Activated CD8-positive, alpha-beta memory T cell treated with anti-CD3 and anti-CD28 coated beads, Interleukin-2, amount 10 ng/mL, durations not matched to agents 7 days and 5 days (primary cell): ENCODE measurements at regions of chr16 and their contacts with region 1.

Region 1: GRCh38 chr16:75519881-75520280 is 16.0 kb downstream of the CHST5 start:
- DNase-seq: no peak
- ATAC-seq: no peak
- H3K4me3 Mint-ChIP-seq: no peak overlapping the region
- H3K27ac Mint-ChIP-seq: no peak overlapping the region
- H3K4me1 Mint-ChIP-seq: peaks cover 9% of the 10 kb centered on the region
- H3K27me3 Mint-ChIP-seq: peaks cover 4% of the 10 kb centered on the region

Region 2: DNA sequence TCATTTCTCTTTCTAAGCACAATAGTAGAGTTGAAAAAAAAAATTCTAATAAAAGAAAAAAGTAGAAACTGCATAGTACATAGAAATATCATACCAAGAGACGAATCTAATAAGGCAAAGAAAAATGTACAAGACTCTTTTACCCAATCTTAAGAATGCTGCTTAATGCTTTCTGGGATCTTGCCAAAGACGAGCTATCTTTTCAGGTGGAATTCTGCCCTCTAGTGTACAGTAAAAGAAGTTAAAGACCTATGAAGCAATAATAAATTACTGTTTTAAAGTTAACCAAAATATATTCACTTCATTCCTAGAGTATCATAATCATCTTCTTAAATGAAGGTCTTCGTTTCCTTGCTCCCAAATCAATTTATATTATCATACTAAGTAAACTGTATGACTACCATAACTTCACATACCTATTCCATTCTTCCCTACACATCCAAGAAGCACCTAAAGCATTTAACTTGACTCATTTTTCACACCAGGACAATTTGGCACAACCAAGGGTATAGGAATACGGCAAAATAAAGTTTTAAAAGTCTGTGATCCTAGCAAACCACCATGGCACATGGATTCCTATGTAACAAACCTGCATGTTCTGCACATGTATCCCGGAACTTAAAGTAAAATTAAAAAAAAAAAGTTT is 134.3 kb before region 1 on chr16:
- CTCF ChIA-PET with region 1: no interaction called
- DNase-seq: no peak
- ATAC-seq: peak; percentile 47
- H3K4me3 Mint-ChIP-seq: no peak overlapping the region
- H3K27ac Mint-ChIP-seq: no peak overlapping the region
- H3K4me1 Mint-ChIP-seq: peaks cover 5% of the 10 kb centered on the region
- H3K27me3 Mint-ChIP-seq: peaks cover 16% of the 10 kb centered on the region

Region 3: DNA sequence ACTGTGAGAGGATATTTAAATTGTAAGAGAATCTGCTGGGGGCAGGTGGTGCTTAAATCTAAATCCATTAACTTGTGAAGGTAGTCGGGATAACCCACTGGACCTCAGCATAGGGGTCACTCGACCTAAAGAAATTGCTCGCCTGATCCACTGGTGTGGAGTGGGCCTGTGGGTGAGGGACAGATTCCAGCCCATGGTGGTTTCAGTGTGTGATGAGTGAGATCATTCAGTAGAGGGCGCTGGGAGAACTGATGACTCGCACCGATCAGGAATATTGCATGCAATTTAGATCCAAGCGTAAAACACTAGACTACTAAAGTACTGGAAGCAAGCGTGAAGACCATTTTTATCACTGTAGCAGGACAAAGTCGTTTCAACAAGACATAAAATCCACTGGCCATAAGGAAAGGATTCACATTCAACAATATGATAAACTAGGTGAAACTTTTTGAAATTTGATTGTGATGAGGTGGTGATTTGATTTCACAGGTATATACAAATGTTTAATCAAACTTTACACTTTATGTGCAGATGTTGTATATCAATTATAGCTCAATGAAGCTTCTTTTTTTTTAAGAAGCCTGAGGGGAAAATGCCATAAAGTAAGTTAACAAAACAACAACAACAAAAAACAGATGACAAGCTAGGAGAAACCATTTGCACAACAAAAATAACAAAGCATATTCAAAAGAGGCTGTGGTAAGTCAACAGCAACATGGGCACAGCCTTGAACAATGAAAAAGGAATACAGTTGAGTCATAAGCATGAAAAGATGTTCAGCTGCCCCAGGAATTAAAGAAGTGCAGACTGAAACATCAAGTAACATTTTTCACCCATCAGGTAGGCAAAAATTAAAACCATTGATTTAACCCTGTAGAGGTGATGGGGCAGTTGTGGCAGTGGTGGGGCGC is 47.9 kb before region 1 on chr16:
- CTCF ChIA-PET with region 1: interaction called, 13 read pairs
- DNase-seq: peak; percentile 48
- ATAC-seq: peak; percentile 78
- H3K4me3 Mint-ChIP-seq: no peak overlapping the region
- H3K27ac Mint-ChIP-seq: no peak overlapping the region
- H3K4me1 Mint-ChIP-seq: no peaks in the 10 kb centered on the region
- H3K27me3 Mint-ChIP-seq: no peaks in the 10 kb centered on the region

Region 4: GRCh38 chr16:75555707-75556430 is 36.0 kb after region 1 on chr16 and contains the start of gene TMEM231:
- CTCF ChIA-PET with region 1: interaction called, 24 read pairs
- DNase-seq: peak; percentile 98
- ATAC-seq: peak; percentile 97
- H3K4me3 Mint-ChIP-seq: peak within 1 kb of the TSS; percentile 83
- H3K27ac Mint-ChIP-seq: peak within 1 kb of the TSS; percentile 62
- H3K4me1 Mint-ChIP-seq: peaks cover 13% of the 10 kb centered on the region
- H3K27me3 Mint-ChIP-seq: peaks cover 13% of the 10 kb centered on the region
- total RNA-seq, gene TMEM231: 2.9 to 3.2 TPM

Region 5: DNA sequence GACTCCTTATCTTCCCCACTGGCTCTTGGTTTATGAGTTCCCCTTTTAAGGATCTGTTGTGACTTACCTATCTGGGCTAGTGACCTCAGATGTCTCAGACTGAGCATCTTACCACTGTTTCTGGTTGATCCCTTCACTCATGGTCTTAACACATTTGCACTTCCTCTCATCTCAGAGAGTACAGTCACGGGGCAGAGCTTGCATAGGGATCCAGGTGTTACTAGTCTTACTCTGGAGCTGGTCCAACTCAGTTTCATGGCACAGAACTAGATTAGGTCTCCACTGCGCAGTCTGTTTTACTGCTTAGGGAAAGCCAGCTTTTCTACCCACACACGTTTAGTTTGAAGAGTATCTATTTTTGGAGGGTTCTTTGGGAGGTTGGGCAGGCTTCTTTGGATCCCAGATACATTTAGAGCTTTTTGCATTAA is 56.5 kb after region 1 on chr16:
- CTCF ChIA-PET with region 1: no interaction called
- DNase-seq: no peak
- ATAC-seq: no peak
- H3K4me3 Mint-ChIP-seq: no peak overlapping the region
- H3K27ac Mint-ChIP-seq: no peak overlapping the region
- H3K4me1 Mint-ChIP-seq: peaks cover 17% of the 10 kb centered on the region
- H3K27me3 Mint-ChIP-seq: no peaks in the 10 kb centered on the region

Region 6: GRCh38 chr16:75622761-75623605 is 103.1 kb after region 1 on chr16 and contains the start of gene ADAT1:
- CTCF ChIA-PET with region 1: interaction called, 20 read pairs
- DNase-seq: peak; percentile 99
- ATAC-seq: peak; percentile 90
- H3K4me3 Mint-ChIP-seq: peak within 1 kb of the TSS; percentile 90
- H3K27ac Mint-ChIP-seq: peak within 1 kb of the TSS; percentile 97
- H3K4me1 Mint-ChIP-seq: peaks cover 46% of the 10 kb centered on the region
- H3K27me3 Mint-ChIP-seq: no peaks in the 10 kb centered on the region
- total RNA-seq, gene ADAT1: 48.3 to 57.2 TPM

Region 7: GRCh38 chr16:75653922-75654321 is 134.0 kb after region 1 on chr16:
- CTCF ChIA-PET with region 1: interaction called, 23 read pairs
- DNase-seq: no peak
- ATAC-seq: no peak
- H3K4me3 Mint-ChIP-seq: no peak overlapping the region
- H3K27ac Mint-ChIP-seq: peak overlapping the region; percentile 59
- H3K4me1 Mint-ChIP-seq: peaks cover 38% of the 10 kb centered on the region
- H3K27me3 Mint-ChIP-seq: no peaks in the 10 kb centered on the region